ENCODE measurements at regions of chr1 and their contacts with region 1.

Region 1: GRCh38 chr1:234610348-234611152 is 572 bp upstream of the IRF2BP2 start:
- DNase-seq: peak; percentile 92
- H3K4me3 ChIP-seq: peak overlapping the region; percentile 46 to 49 (median 48)
- H3K27ac ChIP-seq: peak overlapping the region; percentile 99
- H3K4me1 ChIP-seq: peaks cover 44% of the 10 kb centered on the region
- H3K27me3 ChIP-seq: no peaks in the 10 kb centered on the region
- CTCF ChIP-seq: peak in 1 of 2 donors; percentile 24

Region 2: DNA sequence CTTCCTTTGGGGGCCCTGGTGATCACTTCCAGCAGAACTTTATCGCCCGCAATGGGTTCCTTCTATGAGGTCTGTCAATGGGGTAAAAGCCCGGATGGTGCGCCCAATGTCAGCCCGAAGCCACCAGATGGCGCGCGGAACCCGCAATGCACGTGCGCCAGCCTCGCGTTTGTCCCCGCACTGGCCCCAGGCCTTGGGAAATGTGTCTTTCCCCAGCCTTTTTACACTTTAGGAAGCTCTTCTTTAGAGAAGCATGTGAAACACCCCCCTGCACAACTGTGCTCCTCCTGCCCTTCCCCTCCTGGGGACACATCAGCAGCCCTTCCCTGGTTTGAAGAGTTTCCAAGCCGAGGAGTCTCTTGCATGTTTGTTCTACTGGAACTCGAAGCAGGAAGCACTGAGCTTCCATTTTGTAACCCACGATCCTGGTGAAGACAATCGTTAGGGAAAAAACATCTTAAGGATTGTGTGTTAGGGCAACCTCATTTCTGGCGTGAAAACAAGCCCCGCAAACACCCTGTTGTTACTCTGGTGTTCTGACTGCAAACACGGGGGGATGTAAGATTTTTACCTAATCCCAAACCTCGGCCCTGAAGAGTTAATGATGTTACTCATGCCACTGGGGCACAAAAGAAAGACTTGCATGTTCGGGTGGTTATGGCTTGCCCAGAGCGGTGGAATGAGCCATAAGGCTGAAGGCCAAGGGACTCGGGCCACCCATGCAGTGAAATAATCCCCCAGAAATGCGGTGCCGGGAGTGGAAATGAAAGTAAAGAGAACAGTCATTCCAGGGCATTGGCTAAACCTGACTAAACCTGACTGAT is 111.2 kb before region 1 on chr1:
- CTCF ChIA-PET with region 1: interaction called, 4 read pairs
- dilution Hi-C with region 1: no loop called
- in situ Hi-C with region 1: loop called in 1 of 2 experiments (anchors 5 kb)
- intact Hi-C with region 1: loop called (anchors 1 kb)
- DNase-seq: peak; percentile 84
- H3K4me3 ChIP-seq: peak overlapping the region in 2 of 3 experiments; percentile 10 to 13
- H3K27ac ChIP-seq: peak overlapping the region; percentile 90
- H3K4me1 ChIP-seq: peaks cover 38% of the 10 kb centered on the region
- H3K27me3 ChIP-seq: no peaks in the 10 kb centered on the region
- CTCF ChIP-seq: peak; percentile 89 to 97

Region 3: GRCh38 chr1:234631721-234632125 is 21.2 kb after region 1 on chr1:
- CTCF ChIA-PET with region 1: no interaction called
- dilution Hi-C with region 1: no loop called
- in situ Hi-C with region 1: no loop called
- intact Hi-C with region 1: no loop called
- DNase-seq: peak; percentile 94
- H3K4me3 ChIP-seq: no peak overlapping the region
- H3K27ac ChIP-seq: peak overlapping the region; percentile 82
- H3K4me1 ChIP-seq: peaks cover 18% of the 10 kb centered on the region
- H3K27me3 ChIP-seq: no peaks in the 10 kb centered on the region
- CTCF ChIP-seq: no peak

Region 4: DNA sequence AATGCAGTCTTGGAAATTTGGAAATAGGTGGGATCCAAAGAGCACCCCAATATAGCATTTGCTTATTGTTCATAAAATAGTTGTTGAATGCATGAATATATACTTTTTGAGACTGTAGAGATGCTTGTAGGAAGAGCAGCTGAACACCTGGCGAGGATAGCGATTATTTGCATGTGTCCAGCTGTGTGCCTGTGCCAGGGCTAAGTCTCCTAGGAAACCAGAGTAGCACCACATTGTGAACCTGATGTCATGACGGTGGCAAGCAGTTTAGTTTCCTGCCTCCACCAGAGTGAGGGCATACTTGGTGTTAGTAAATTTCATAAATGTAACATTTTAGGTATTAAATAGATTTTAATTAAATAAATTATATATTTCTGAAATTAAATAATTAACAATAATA is 36.7 kb after region 1 on chr1:
- CTCF ChIA-PET with region 1: no interaction called
- dilution Hi-C with region 1: no loop called
- in situ Hi-C with region 1: no loop called
- intact Hi-C with region 1: loop called (anchors 1 kb)
- DNase-seq: no peak
- H3K4me3 ChIP-seq: no peak overlapping the region
- H3K27ac ChIP-seq: peak overlapping the region; percentile 65
- H3K4me1 ChIP-seq: peaks cover 33% of the 10 kb centered on the region
- H3K27me3 ChIP-seq: no peaks in the 10 kb centered on the region
- CTCF ChIP-seq: no peak

Region 5: DNA sequence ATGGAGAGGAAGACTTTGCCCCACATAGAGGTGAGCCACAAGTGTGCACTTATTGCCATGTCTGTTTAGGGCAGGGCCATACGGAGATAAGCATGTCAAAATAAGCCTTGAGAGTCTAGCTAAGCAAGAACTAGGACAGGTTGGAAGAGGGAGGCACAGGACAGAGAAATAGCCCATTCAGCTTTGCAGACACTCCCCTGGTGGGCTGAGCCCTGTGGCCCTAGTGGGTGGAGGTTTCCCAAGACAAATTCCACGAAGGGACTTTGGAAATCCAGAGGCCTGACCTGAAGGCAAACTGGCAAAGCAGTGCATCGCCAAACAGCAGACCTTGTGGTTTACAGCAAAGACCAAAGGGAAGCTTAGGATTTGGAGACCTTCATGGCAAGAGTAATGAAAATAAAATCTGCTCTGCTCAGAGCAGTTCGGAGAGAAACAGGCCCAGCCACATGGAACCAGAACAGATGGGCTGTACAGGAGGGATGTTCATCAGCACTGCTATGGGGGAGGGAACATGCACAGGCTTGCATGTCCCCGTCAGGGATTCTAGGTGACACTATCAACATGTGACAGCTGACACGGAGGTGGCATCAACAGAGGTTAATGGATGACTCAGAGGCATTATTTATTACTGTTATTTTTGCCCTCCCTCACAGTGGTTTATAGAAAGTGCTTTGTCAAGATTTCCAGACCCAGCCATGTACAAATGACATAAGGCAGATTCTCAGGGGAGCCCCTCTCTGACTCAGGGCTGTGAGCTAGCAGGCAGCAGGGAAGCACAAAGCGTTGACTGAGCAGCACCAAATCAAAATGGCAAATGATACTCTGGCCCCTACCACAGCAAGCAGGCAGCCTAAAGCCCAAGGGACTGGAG is 89.5 kb after region 1 on chr1:
- CTCF ChIA-PET with region 1: no interaction called
- dilution Hi-C with region 1: loop called (anchors 10 kb)
- in situ Hi-C with region 1: no loop called
- intact Hi-C with region 1: no loop called
- DNase-seq: peak; percentile 82
- H3K4me3 ChIP-seq: no peak overlapping the region
- H3K27ac ChIP-seq: no peak overlapping the region
- H3K4me1 ChIP-seq: peaks cover 12% of the 10 kb centered on the region
- H3K27me3 ChIP-seq: no peaks in the 10 kb centered on the region
- CTCF ChIP-seq: no peak

Region 6: DNA sequence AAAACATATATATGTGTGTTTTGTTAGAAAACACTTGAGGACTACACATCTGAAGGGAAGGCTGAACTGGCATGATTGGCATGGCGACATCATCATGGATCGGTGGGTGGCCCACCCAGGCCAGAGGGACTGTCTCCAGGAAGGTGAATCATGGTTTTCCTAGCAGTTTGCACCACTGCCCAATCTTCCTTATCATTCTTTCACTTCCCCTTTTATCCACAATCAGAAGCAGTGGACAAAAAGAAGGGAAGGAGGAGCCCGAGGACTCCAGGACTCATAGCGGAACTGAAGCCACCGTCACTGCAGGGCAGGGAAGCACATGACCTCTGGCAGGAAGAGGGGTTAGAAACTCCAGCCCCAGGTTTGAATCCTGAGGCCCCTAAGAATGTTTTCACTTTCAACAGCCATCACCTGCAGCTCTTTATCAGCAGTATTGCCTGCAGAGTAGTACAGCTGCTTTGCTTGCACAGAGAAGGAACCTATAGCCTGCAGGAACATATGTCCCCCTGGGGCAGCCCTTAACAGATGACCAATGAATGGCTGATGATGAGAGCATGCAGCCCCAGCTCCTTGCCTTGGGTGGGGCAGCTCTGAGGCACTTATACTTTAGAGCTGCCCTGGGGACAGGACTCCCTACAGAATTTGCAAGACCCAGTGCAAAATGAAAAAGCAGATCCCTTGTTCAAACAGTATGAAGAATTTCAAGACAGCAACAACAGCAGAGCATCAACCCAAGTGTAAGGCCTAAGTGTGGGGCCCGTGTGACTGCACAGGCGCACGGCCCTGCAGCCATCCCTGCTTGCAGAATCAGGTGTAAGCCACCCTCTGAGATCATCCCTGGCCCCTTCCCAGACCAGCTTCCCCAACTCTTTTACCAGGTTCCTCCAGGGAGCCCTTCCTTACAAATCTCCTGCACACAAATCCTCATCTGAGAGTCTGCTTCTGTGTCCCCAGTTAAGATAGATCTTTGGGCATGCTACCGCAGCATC is 241.2 kb after region 1 on chr1:
- CTCF ChIA-PET with region 1: no interaction called
- dilution Hi-C with region 1: no loop called
- in situ Hi-C with region 1: loop called in 1 of 2 experiments (anchors 25 kb)
- intact Hi-C with region 1: no loop called
- DNase-seq: no peak
- H3K4me3 ChIP-seq: no peak overlapping the region
- H3K27ac ChIP-seq: no peak overlapping the region
- H3K4me1 ChIP-seq: peaks cover 25% of the 10 kb centered on the region
- H3K27me3 ChIP-seq: no peaks in the 10 kb centered on the region
- CTCF ChIP-seq: no peak

Region 7: DNA sequence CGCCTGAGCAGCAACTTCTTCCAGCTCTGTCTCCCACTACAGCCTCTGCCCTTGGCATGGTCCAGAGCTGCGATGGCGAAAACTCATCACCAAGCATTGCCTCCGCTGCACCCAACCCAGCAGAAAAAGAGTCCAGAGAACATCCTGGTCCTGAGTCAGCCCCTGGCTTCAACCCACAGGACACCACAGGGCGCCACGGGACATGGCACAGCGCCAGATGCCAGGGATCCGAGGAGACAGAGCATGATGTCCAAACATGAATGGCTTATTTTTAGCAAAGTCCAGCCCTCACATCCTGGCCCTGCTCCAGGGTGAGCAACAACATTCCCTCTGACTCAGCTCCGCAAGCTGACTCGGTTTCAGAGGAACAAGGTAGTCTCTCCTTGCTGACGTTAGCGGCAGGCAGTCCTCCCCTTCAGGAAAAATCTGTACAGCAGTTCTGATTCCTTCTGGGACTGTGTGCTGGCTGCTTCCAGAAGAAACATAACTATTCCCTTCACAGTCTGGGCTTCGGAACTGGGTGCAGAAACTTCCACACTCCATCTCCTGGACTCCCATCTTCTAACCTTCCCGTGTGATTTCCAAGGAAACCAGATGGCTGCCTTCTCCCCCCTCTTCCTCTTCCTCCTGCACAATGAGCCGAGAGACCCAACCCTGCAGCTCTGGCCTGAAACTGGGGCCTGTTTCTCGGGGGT is 386.8 kb after region 1 on chr1:
- CTCF ChIA-PET with region 1: no interaction called
- dilution Hi-C with region 1: no loop called
- in situ Hi-C with region 1: loop called in 1 of 2 experiments (anchors 5 kb)
- intact Hi-C with region 1: loop called (anchors 1 kb)
- DNase-seq: peak; percentile 100
- H3K4me3 ChIP-seq: peak overlapping the region in 1 of 3 experiments; percentile 8
- H3K27ac ChIP-seq: peak overlapping the region; percentile 98
- H3K4me1 ChIP-seq: peaks cover 27% of the 10 kb centered on the region
- H3K27me3 ChIP-seq: no peaks in the 10 kb centered on the region
- CTCF ChIP-seq: peak in 1 of 2 donors; percentile 7

Region 8: GRCh38 chr1:235075188-235075926 is 464.8 kb after region 1 on chr1:
- CTCF ChIA-PET with region 1: no interaction called
- dilution Hi-C with region 1: loop called (anchors 5 kb)
- in situ Hi-C with region 1: loop called (anchors 5 to 10 kb)
- intact Hi-C with region 1: no loop called
- DNase-seq: peak; percentile 86
- H3K4me3 ChIP-seq: no peak overlapping the region
- H3K27ac ChIP-seq: peak overlapping the region; percentile 78
- H3K4me1 ChIP-seq: peaks cover 54% of the 10 kb centered on the region
- H3K27me3 ChIP-seq: no peaks in the 10 kb centered on the region
- CTCF ChIP-seq: no peak